Activated T-helper 1 cell treated with anti-CD3 and anti-CD28 coated beads, Interleukin-12 subunit alpha, Interleukin-12 subunit beta, Interleukin-2, Interleukin-4 antibody, amounts not matched to agents 30 ng/mL and 10 ng/mL and 1 ng/mL, durations not matched to agents 14 hours and 24 hours and 36 hours (primary cell): ENCODE measurements at regions of chr17 and their contacts with region 1.

Region 1: GRCh38 chr17:48618256-48618897 is 3.3 kb upstream of the HOXB8 start:
- DNase-seq: peak; percentile 75
- H3K4me3 Mint-ChIP-seq: no peak overlapping the region
- H3K27ac Mint-ChIP-seq: peak overlapping the region; percentile 62
- H3K4me1 Mint-ChIP-seq: peaks cover 28% of the 10 kb centered on the region
- H3K27me3 Mint-ChIP-seq: peaks cover 93% of the 10 kb centered on the region

Region 2: GRCh38 chr17:47840740-47841603 is 777.4 kb before region 1 on chr17 and contains the start of gene SCRN2:
- intact Hi-C with region 1: loop called (anchors 10 kb)
- DNase-seq: peak; percentile 86
- H3K4me3 Mint-ChIP-seq: peak within 1 kb of the TSS; percentile 96
- H3K27ac Mint-ChIP-seq: peak within 1 kb of the TSS; percentile 96
- H3K4me1 Mint-ChIP-seq: peaks cover 28% of the 10 kb centered on the region
- H3K27me3 Mint-ChIP-seq: peaks cover 16% of the 10 kb centered on the region
- total RNA-seq, gene SCRN2: 24.5 and 26.3 TPM in 2 replicates

Region 3: GRCh38 chr17:48011405-48012150 is 606.8 kb before region 1 on chr17:
- intact Hi-C with region 1: loop called (anchors 1 kb)
- DNase-seq: peak; percentile 44
- H3K4me3 Mint-ChIP-seq: peak overlapping the region; percentile 84
- H3K27ac Mint-ChIP-seq: peak overlapping the region; percentile 37
- H3K4me1 Mint-ChIP-seq: peaks cover 6% of the 10 kb centered on the region
- H3K27me3 Mint-ChIP-seq: peaks cover 24% of the 10 kb centered on the region

Region 4: GRCh38 chr17:48084932-48085444 is 533.4 kb before region 1 on chr17:
- intact Hi-C with region 1: loop called (anchors 1 kb)
- DNase-seq: no peak
- H3K4me3 Mint-ChIP-seq: no peak overlapping the region
- H3K27ac Mint-ChIP-seq: no peak overlapping the region
- H3K4me1 Mint-ChIP-seq: peaks cover 9% of the 10 kb centered on the region
- H3K27me3 Mint-ChIP-seq: no peaks in the 10 kb centered on the region

Region 5: DNA sequence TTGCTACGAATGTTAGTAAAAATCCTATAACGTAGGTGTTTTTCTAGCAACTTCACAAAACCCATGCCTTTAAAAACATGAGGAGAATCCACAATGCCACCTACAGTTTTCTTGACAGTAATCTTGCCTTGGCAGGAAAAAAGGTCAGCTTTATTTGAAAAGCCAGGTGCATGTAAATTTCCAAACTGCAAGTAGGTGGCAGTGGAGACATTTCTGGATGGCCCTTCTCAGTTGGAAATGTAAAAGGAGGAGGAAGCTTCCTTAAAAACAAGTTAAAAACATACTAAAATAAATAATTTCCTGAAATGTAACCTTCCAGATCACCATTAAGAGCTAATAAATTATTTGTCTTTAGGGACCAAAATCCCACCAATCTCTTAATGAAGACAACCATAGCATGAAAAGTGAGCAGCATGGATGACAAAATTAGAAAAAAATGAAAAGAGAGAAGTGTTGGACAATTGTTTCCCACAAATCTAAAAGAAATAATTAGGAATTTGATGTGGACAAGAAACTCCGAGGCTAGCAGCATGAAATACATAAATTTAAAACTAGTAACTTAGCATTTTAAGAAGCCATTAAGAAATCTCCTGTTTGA is 358.6 kb before region 1 on chr17:
- intact Hi-C with region 1: loop called (anchors 5 kb)
- DNase-seq: no peak
- H3K4me3 Mint-ChIP-seq: no peak overlapping the region
- H3K27ac Mint-ChIP-seq: no peak overlapping the region
- H3K4me1 Mint-ChIP-seq: peaks cover 6% of the 10 kb centered on the region
- H3K27me3 Mint-ChIP-seq: no peaks in the 10 kb centered on the region

Region 6: GRCh38 chr17:48335858-48336500 is 282.4 kb before region 1 on chr17:
- intact Hi-C with region 1: no loop called
- DNase-seq: no peak
- H3K4me3 Mint-ChIP-seq: no peak overlapping the region
- H3K27ac Mint-ChIP-seq: no peak overlapping the region
- H3K4me1 Mint-ChIP-seq: peaks cover 16% of the 10 kb centered on the region
- H3K27me3 Mint-ChIP-seq: no peaks in the 10 kb centered on the region